H1 (cell line): ENCODE measurements at regions of chr1 and their contacts with region 1.

Region 1: DNA sequence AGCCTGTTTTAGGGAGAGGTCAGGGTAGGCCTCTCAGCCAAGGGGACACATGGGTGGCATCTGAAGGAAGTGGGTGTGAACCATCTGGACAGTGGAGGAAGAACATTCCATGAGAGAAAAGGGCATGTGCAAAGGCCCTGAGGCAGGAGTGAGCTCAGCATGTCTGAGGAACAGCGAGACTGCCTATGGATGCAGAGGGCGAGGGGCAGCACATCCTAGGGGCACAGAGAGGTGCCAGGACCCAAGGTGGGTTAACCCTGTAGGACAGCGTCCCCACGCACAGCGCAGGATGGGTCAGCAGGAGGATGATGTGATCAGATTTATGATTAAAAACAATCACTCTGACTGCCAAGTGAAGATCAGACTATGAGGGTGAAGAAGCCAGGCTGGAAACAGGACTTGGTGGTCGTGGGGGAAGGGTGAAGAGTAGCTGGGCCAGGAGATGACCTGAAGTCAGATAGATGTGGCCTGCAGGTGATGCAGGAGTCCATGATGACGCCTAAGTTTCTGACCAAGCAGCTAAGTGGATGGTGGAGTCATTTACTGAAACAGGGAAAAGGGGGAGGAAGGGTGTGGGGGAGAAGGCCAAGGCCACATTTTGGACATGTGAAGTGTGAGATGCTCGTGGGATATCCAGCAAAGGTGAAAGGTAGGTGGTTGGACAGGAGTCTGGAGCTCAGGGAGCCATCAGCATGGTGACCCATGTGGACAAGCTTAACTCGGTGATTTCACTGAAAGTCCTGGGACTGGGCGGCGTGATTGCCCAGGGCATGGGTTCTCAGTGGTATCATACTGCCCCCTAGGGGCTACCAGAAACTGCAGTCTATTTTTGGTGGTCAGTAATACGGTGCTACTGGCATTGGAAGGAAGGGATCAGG is 37.8 kb downstream of the PABPC4 start:
- DNase-seq: peak; percentile 25 to 75
- H3K4me3 ChIP-seq: no peak overlapping the region
- H3K27ac ChIP-seq: no peak overlapping the region
- H3K4me1 ChIP-seq: no peaks in the 10 kb centered on the region
- H3K27me3 ChIP-seq: no peaks in the 10 kb centered on the region
- CTCF ChIP-seq: peak; percentile 63 to 91 (median 87)
- EP300 ChIP-seq: no peak
- POLR2A ChIP-seq: no peak
- RAD21 ChIP-seq: peak; percentile 92 to 93

Region 2: DNA sequence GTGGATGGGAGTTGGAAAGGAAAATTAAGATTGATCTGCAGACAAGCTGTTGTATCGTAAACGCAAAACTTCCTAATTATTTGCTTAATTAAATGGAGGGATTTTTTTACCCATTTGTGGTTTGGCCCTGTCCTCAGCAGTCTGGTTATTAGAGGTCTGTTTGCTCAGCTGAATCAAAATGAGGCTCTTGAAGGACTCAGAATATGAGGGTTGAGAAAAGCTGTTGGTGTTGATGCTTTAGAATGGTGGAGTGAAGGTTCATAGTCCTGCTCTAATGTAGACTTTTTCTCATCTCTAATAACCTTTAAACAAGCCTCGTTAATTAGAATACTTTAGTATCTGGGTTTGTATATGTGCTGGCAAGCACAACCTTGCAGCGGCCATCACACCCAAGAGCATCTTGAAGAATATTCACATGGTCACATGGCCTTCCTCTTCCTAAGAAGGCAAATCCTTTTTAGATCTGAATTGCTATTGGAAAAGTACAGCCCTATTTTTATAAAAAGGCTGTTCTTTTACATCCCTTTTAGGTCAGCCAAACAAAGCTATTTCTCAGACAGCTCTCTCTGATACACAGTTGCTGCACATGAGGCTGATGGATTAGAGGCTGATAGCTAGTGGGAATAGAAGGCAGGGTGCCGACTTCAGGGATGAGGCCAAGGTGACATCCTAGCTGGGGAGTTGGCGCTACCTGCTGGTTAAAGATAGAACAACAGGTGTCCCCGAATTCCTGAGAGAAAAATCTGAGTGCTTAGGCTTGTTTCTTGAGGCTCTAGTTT is 280.5 kb before region 1 on chr1:
- CTCF ChIA-PET with region 1: no interaction called
- POLR2A ChIA-PET with region 1: no interaction called
- DNase-seq: peak; percentile 47 to 89
- H3K4me3 ChIP-seq: no peak overlapping the region
- H3K27ac ChIP-seq: no peak overlapping the region
- H3K4me1 ChIP-seq: peaks cover 0 to 2% (median 0%) of the 10 kb centered on the region in 4 experiments; a peak in 1 of 7 replicates
- H3K27me3 ChIP-seq: no peaks in the 10 kb centered on the region
- CTCF ChIP-seq: peak; percentile 65 to 95 (median 89)
- EP300 ChIP-seq: no peak
- POLR2A ChIP-seq: no peak
- RAD21 ChIP-seq: peak; percentile 98 to 99

Region 3: GRCh38 chr1:39485046-39485803 is 53.6 kb before region 1 on chr1:
- CTCF ChIA-PET with region 1: interaction called, 25 read pairs
- POLR2A ChIA-PET with region 1: interaction called, 3 read pairs
- DNase-seq: no peak
- H3K4me3 ChIP-seq: no peak overlapping the region
- H3K27ac ChIP-seq: no peak overlapping the region
- H3K4me1 ChIP-seq: no peaks in the 10 kb centered on the region
- H3K27me3 ChIP-seq: peaks cover 2 to 11% (median 8%) of the 10 kb centered on the region in 4 experiments
- CTCF ChIP-seq: no peak
- EP300 ChIP-seq: no peak
- POLR2A ChIP-seq: no peak
- RAD21 ChIP-seq: no peak

Region 4: GRCh38 chr1:39509360-39510009 is 29.3 kb before region 1 on chr1:
- CTCF ChIA-PET with region 1: interaction called, 12 read pairs
- POLR2A ChIA-PET with region 1: no interaction called
- DNase-seq: no peak
- H3K4me3 ChIP-seq: no peak overlapping the region
- H3K27ac ChIP-seq: no peak overlapping the region
- H3K4me1 ChIP-seq: no peaks in the 10 kb centered on the region; a peak in 1 of 7 replicates
- H3K27me3 ChIP-seq: peaks cover under 1 to 3% (median 2%) of the 10 kb centered on the region in 4 experiments; a peak in 5 of 7 replicates
- CTCF ChIP-seq: no peak
- EP300 ChIP-seq: no peak
- POLR2A ChIP-seq: no peak
- RAD21 ChIP-seq: no peak

Region 5: DNA sequence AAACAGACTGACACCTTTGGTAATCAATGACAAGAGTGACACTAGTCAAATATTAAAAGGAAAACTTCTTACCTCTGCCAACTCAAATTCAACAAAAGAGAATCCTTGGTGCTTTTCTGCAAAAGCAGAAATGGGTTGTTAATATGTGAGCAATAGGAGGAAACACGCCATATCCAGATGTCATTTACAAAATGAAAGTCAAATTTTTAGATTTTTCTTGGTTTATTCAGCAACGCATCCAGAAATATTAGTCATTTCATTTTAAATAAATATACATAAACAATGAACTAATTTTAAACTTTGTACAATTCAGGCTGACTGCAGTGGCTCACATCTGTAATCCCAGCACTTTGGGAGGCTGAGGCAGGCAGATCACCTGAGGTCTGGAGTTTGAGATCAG is 15.4 kb after region 1 on chr1:
- CTCF ChIA-PET with region 1: interaction called, 17 read pairs
- POLR2A ChIA-PET with region 1: interaction called, 5 read pairs
- DNase-seq: no peak
- H3K4me3 ChIP-seq: no peak overlapping the region
- H3K27ac ChIP-seq: no peak overlapping the region
- H3K4me1 ChIP-seq: no peaks in the 10 kb centered on the region; a peak in 1 of 7 replicates
- H3K27me3 ChIP-seq: no peaks in the 10 kb centered on the region
- CTCF ChIP-seq: no peak
- EP300 ChIP-seq: no peak
- POLR2A ChIP-seq: no peak
- RAD21 ChIP-seq: no peak

Region 6: GRCh38 chr1:39632682-39633417 is 94.0 kb after region 1 on chr1:
- CTCF ChIA-PET with region 1: no interaction called
- POLR2A ChIA-PET with region 1: no interaction called
- DNase-seq: peak in 1 of 2 experiments; percentile 86
- H3K4me3 ChIP-seq: peak overlapping the region; percentile 10 to 53 (median 32); a peak in 6 of 8 replicates
- H3K27ac ChIP-seq: no peak overlapping the region
- H3K4me1 ChIP-seq: peaks cover 0 to 2% (median under 1%) of the 10 kb centered on the region in 4 experiments; a peak in 3 of 7 replicates
- H3K27me3 ChIP-seq: peaks cover 0 to 43% (median 33%) of the 10 kb centered on the region in 4 experiments; a peak in 6 of 7 replicates
- CTCF ChIP-seq: no peak
- EP300 ChIP-seq: no peak
- POLR2A ChIP-seq: no peak
- RAD21 ChIP-seq: no peak

Region 7: DNA sequence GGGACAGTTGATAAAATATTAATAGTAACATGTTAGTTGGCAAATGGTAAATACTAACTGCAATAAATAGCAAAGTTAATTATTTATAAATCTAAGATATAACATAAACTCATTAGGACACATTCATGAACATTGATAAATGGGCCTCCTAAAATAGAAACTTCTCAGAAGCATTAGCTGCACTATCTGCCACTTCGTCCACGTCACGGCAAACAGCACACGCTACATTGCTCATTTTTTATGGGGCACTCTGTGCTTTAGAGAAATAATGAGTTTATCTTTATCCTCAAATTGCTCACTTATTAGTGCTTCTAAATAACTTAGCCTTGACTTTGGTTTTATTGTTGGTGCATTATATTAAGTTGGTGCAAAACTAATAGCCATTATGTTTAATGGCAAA is 168.7 kb after region 1 on chr1:
- CTCF ChIA-PET with region 1: no interaction called
- POLR2A ChIA-PET with region 1: no interaction called
- DNase-seq: no peak
- H3K4me3 ChIP-seq: no peak overlapping the region
- H3K27ac ChIP-seq: no peak overlapping the region
- H3K4me1 ChIP-seq: peaks cover 3 to 14% (median 4%) of the 10 kb centered on the region in 4 experiments; a peak in 5 of 7 replicates
- H3K27me3 ChIP-seq: peaks cover 65 to 99% (median 90%) of the 10 kb centered on the region in 4 experiments
- CTCF ChIP-seq: no peak
- EP300 ChIP-seq: no peak
- POLR2A ChIP-seq: no peak
- RAD21 ChIP-seq: no peak